ENCODE measurements at regions of chr1 and their contacts with region 1.

Region 1: GRCh38 chr1:203216274-203217138 is 13.0 kb downstream of the CHIT1 start:
- DNase-seq: peak; percentile 71
- H3K4me3 ChIP-seq: no peak overlapping the region
- H3K27ac ChIP-seq: no peak overlapping the region
- H3K4me1 ChIP-seq: no peaks in the 10 kb centered on the region
- H3K27me3 ChIP-seq: peaks cover 8% of the 10 kb centered on the region; the same call in 1 of the 2 replicates

Region 2: DNA sequence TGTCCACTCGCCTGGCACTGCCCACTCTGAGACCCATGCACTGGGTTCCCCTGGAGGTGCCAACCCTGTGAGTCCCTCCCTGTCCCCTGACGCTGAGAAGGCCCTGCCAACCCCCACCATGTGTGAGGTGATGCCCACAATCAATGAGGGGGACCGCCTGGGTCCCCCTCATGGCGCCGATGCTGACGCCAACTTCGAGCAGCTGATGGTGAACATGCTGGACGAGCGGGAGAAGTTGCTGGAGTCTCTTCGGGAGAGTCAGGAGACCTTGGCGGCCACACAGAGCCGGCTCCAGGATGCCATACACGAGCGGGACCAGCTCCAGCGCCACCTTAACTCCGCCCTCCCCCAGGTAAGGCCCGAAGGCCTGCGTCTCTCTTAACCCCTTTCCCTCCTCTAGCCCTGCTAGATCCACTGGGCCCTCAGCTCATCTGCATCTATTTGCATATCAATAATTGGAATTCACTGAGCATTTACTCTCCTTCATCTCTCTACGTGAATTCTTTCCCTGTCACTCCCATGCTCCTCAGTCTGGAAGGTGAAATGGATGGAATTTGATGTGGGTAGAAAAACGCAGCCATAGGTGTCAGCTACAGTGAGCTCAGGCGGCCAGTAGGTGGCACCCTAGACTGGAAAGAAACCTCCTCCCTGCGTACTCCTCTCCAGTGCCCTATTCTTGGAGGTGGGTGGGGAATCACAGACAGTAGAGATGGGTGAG is 177.5 kb before region 1 on chr1:
- in situ Hi-C with region 1: loop called (anchors 10 kb)
- DNase-seq: peak; percentile 82
- H3K4me3 ChIP-seq: no peak overlapping the region
- H3K27ac ChIP-seq: no peak overlapping the region
- H3K4me1 ChIP-seq: peaks cover 38% of the 10 kb centered on the region
- H3K27me3 ChIP-seq: no peaks in the 10 kb centered on the region

Region 3: GRCh38 chr1:203057911-203058675 is 158.4 kb before region 1 on chr1:
- in situ Hi-C with region 1: no loop called
- DNase-seq: peak; percentile 70
- H3K4me3 ChIP-seq: no peak overlapping the region
- H3K27ac ChIP-seq: no peak overlapping the region
- H3K4me1 ChIP-seq: peaks cover 17% of the 10 kb centered on the region
- H3K27me3 ChIP-seq: no peaks in the 10 kb centered on the region

Region 4: GRCh38 chr1:203117611-203118575 is 98.6 kb before region 1 on chr1:
- in situ Hi-C with region 1: loop called (anchors 10 kb)
- DNase-seq: peak; percentile 85
- H3K4me3 ChIP-seq: no peak overlapping the region
- H3K27ac ChIP-seq: no peak overlapping the region
- H3K4me1 ChIP-seq: no peaks in the 10 kb centered on the region
- H3K27me3 ChIP-seq: peaks cover 42% of the 10 kb centered on the region

Measured in GM23248 (cell line).